ENCODE measurements at regions of chr9 and their contacts with region 1.

Region 1: DNA sequence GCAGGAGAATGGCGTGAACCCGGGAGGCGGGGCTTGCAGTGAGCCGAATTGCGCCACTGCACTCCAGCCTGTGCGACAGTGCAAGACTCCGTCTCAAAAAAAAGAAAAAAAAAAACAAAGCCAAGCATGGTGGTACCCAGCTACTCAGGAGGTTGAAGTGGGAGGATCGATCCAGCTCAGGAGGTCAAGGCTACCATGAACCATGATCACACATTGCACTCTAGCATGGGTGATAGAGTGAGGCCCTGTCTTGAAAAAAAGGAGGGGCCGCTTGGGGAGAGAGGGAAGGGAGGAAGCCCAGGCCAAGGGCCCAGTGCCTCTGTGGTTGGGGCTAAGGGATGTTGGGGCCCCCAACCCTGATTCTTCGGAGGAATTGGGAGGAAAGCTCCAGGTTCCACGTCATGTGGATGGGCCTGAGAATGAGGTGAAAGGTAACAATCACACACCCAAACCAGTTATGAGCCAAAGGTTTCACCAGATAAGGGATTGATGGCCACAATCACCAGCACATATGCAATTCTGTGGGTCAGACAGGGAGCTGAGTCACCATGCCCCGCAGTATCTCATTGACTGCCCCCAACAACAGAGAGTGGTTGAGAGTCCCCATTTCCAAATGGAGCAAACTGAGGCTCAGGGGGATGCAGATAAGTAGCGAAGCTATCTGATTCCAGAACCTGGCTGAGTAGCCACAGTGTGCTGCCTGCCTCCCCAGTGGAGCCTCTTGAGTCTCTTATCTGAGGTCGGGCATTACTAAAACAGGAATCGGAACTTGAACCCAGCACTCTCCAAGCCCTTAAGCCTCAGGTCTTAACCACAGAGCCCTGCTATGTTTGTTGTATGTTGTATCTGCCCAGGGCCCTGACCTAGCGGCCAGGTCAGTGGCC is 20.5 kb downstream of the SWI5 start:
- DNase-seq: no peak
- ATAC-seq: no peak
- H3K4me3 Mint-ChIP-seq: no peak overlapping the region
- H3K27ac Mint-ChIP-seq: no peak overlapping the region
- H3K4me1 Mint-ChIP-seq: no peaks in the 10 kb centered on the region
- H3K27me3 Mint-ChIP-seq: no peaks in the 10 kb centered on the region
- CTCF ChIP-seq: no peak

Region 2: DNA sequence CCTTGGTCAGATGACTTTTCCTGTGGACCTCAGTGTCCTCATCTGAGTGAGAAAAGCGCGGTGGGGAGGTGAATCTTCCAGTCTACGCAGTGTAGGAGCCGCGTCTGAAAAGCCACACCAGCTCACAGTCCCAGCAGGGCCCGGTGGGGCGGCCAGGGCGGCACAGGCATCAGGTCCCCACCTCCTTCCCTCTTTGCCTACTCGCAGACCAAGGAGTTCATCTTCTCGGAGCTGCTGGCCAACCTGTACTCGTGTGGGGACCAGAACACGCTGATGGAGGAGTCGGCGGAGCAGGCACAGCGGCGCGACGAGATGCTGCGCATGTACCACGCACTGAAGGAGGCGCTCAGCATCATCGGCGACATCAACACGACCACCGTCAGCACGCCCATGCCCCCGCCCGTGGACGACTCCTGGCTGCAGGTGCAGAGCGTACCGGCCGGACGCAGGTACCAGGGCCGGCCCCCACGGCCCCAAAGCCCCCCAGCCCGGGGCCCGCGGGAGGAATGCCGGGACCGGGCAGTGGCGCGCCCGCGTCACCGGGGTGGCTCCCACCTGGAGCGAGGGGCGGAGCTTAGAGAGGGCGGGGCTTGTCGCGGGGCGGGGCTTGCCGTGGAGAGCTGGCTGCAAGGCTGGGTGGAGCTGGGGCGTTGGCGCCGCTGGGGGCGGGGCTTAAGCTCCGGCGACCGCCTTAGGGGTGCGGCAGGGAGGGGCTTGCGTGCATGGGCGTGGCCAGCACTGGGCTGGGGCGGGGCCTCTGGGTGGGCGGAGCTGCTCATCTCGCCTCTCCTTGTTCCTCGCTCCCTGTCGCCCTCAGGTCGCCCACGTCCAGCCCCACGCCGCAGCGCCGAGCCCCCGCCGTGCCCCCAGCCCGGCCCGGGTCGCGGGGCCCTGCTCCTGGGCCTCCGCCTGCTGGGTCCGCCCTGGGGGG is 46.4 kb before region 1 on chr9:
- CTCF ChIA-PET with region 1: no interaction called
- POLR2A ChIA-PET with region 1: no interaction called
- intact Hi-C with region 1: no loop called
- DNase-seq: peak; percentile 99
- ATAC-seq: peak; percentile 98
- H3K4me3 Mint-ChIP-seq: peak overlapping the region; percentile 83
- H3K27ac Mint-ChIP-seq: peak overlapping the region; percentile 79
- H3K4me1 Mint-ChIP-seq: peaks cover 29% of the 10 kb centered on the region
- H3K27me3 Mint-ChIP-seq: peaks cover 1% of the 10 kb centered on the region
- CTCF ChIP-seq: no peak

Region 3: GRCh38 chr9:128412120-128412790 is 115.7 kb after region 1 on chr9:
- CTCF ChIA-PET with region 1: no interaction called
- POLR2A ChIA-PET with region 1: no interaction called
- intact Hi-C with region 1: loop called (anchors 5 kb)
- DNase-seq: peak; percentile 27
- ATAC-seq: no peak
- H3K4me3 Mint-ChIP-seq: no peak overlapping the region
- H3K27ac Mint-ChIP-seq: no peak overlapping the region
- H3K4me1 Mint-ChIP-seq: no peaks in the 10 kb centered on the region
- H3K27me3 Mint-ChIP-seq: peaks cover 33% of the 10 kb centered on the region
- CTCF ChIP-seq: no peak

Region 4: GRCh38 chr9:128927731-128928411 is 631.3 kb after region 1 on chr9:
- CTCF ChIA-PET with region 1: no interaction called
- POLR2A ChIA-PET with region 1: no interaction called
- intact Hi-C with region 1: loop called (anchors 5 kb)
- DNase-seq: peak; percentile 30
- ATAC-seq: peak; percentile 86
- H3K4me3 Mint-ChIP-seq: no peak overlapping the region
- H3K27ac Mint-ChIP-seq: no peak overlapping the region
- H3K4me1 Mint-ChIP-seq: peaks cover 5% of the 10 kb centered on the region
- H3K27me3 Mint-ChIP-seq: no peaks in the 10 kb centered on the region
- CTCF ChIP-seq: peak; percentile 90

Measured in activated B cell treated with CpG ODN at 0.5 μM for 24 hours (primary cell).